Activated CD4-positive, alpha-beta memory T cell treated with anti-CD3 and anti-CD28 coated beads, Interleukin-2, amount 10 ng/mL, durations not matched to agents 7 days and 5 days (primary cell): ENCODE measurements at regions of chr17 and their contacts with region 1.

Region 1: GRCh38 chr17:75855310-75856081 is at the start of gene WBP2:
- DNase-seq: peak; percentile 98
- H3K4me3 Mint-ChIP-seq: no peak within 1 kb of the TSS
- H3K27ac Mint-ChIP-seq: peak within 1 kb of the TSS; percentile 85
- H3K4me1 Mint-ChIP-seq: peaks cover 43% of the 10 kb centered on the region
- H3K27me3 Mint-ChIP-seq: no peaks in the 10 kb centered on the region
- total RNA-seq, gene WBP2: 107 to 114 TPM

Region 2: DNA sequence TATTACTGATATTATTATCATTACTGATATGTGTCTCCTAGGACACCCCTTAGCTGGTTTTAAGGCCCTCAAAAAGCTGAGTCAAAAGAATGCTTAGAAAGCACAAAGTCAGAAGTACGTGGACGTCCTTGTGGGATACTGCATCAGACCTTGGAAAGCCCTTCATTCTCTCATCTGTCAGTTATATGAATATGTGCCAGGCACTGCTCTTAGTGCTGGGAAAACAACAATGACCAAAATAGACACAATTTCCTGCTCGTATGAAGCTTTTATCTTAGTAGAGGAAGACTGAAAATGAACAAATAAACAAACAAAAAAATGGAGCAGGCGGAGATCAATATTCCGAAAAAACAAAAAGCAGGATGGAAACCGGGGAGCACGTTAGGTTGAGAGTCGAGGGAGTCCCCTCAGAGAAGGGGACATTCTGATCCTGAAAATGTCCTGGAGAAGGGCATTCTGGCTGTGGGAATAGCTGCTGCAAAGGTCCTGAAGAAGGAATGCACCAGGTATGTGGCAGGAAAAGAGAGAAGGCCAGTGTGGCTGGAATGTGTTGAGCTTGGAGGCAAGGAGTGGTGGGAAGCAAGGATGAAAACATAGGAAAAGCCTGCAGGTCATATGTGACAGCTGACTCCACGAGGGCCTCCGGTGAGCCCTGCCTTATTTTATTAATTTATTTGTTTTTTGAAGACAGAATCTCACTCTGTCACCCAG is 414.6 kb before region 1 on chr17:
- CTCF ChIA-PET with region 1: no interaction called
- POLR2A ChIA-PET with region 1: no interaction called
- DNase-seq: no peak
- H3K4me3 Mint-ChIP-seq: no peak overlapping the region
- H3K27ac Mint-ChIP-seq: no peak overlapping the region
- H3K4me1 Mint-ChIP-seq: peaks cover 8% of the 10 kb centered on the region
- H3K27me3 Mint-ChIP-seq: peaks cover 3% of the 10 kb centered on the region

Region 3: GRCh38 chr17:75779231-75779986 is 76.1 kb before region 1 on chr17:
- CTCF ChIA-PET with region 1: interaction called, 17 read pairs
- POLR2A ChIA-PET with region 1: interaction called, 87 read pairs
- DNase-seq: peak; percentile 96
- H3K4me3 Mint-ChIP-seq: peak overlapping the region; percentile 88
- H3K27ac Mint-ChIP-seq: peak overlapping the region; percentile 96
- H3K4me1 Mint-ChIP-seq: peaks cover 58% of the 10 kb centered on the region
- H3K27me3 Mint-ChIP-seq: no peaks in the 10 kb centered on the region

Region 4: GRCh38 chr17:75822119-75822799 is 33.2 kb before region 1 on chr17:
- CTCF ChIA-PET with region 1: interaction called, 4 read pairs
- POLR2A ChIA-PET with region 1: interaction called, 11 read pairs
- DNase-seq: no peak
- H3K4me3 Mint-ChIP-seq: no peak overlapping the region
- H3K27ac Mint-ChIP-seq: peak overlapping the region; percentile 68
- H3K4me1 Mint-ChIP-seq: peaks cover 28% of the 10 kb centered on the region
- H3K27me3 Mint-ChIP-seq: no peaks in the 10 kb centered on the region

Region 5: DNA sequence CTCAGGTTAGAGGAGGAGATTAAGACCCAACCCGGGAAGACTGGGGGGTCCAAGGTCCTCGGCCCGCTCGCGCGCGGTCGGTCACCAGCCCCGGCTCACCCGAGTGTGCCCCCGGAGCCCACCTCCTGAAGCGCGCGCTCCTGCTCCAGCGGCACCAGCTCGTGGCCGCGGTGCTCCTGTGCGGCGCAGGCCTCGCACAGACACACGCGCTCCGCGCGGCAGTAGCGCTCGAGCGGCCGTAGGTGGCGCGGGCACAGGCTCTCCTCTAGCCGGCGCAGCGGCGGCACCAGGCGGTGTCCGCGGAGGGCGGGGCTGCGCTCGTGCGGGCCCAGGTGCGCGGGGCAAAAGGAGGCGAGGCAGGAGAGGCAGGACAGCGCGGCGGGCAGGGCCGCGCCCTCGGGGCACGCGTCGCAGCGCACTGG is 22.3 kb after region 1 on chr17:
- CTCF ChIA-PET with region 1: interaction called, 91 read pairs
- POLR2A ChIA-PET with region 1: interaction called, 221 read pairs
- DNase-seq: peak; percentile 82
- H3K4me3 Mint-ChIP-seq: peak overlapping the region; percentile 89
- H3K27ac Mint-ChIP-seq: peak overlapping the region; percentile 93
- H3K4me1 Mint-ChIP-seq: peaks cover 63% of the 10 kb centered on the region
- H3K27me3 Mint-ChIP-seq: peaks cover 14% of the 10 kb centered on the region